ENCODE measurements at regions of chr6 and their contacts with region 1.

Region 1: GRCh38 chr6:167968091-167968490 is 29.4 kb upstream of the KIF25 start:
- DNase-seq: peak; percentile 29 to 85
- H3K4me3 ChIP-seq: no peak overlapping the region
- H3K27ac ChIP-seq: no peak overlapping the region
- H3K4me1 ChIP-seq: peaks cover 0 to 4% (median under 1%) of the 10 kb centered on the region in 4 experiments; a peak in 4 of 7 replicates
- H3K27me3 ChIP-seq: no peaks in the 10 kb centered on the region
- CTCF ChIP-seq: peak; percentile 81 to 86 (median 86)
- EP300 ChIP-seq: no peak
- POLR2A ChIP-seq: no peak
- RAD21 ChIP-seq: peak; percentile 67 to 70

Region 2: GRCh38 chr6:167949179-167949578 is 18.9 kb before region 1 on chr6:
- CTCF ChIA-PET with region 1: interaction called, 12 read pairs
- POLR2A ChIA-PET with region 1: interaction called, 5 read pairs
- DNase-seq: no peak
- H3K4me3 ChIP-seq: no peak overlapping the region
- H3K27ac ChIP-seq: no peak overlapping the region
- H3K4me1 ChIP-seq: no peaks in the 10 kb centered on the region
- H3K27me3 ChIP-seq: no peaks in the 10 kb centered on the region
- CTCF ChIP-seq: no peak
- EP300 ChIP-seq: no peak
- POLR2A ChIP-seq: no peak
- RAD21 ChIP-seq: no peak

Region 3: DNA sequence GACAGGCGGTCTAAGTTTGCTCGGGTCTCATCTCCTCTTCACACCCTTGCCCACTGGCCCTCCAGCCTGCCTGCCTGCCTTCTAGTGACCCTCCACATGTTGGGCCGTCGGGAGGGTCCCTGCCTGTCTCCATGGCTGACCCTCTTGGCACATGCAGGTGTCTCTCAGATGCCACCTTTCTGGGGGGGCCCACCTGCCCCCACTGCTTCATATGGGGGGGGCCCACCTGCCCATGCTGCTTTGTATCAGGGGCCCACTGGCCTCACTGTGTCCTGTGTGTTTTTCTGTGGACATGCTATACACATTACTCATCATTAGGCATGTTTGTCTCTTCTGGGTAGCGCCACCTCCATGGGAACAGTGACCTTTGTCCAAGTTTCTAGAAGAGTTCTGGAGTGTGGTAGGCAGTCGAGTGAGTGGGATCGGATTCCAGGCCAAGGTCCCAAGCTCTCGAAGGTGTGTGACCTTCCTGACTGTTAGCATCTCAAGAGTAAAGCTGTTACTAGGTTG is 11.1 kb before region 1 on chr6:
- CTCF ChIA-PET with region 1: interaction called, 19 read pairs
- POLR2A ChIA-PET with region 1: interaction called, 5 read pairs
- DNase-seq: no peak
- H3K4me3 ChIP-seq: no peak overlapping the region
- H3K27ac ChIP-seq: no peak overlapping the region
- H3K4me1 ChIP-seq: no peaks in the 10 kb centered on the region
- H3K27me3 ChIP-seq: no peaks in the 10 kb centered on the region
- CTCF ChIP-seq: no peak
- EP300 ChIP-seq: no peak
- POLR2A ChIP-seq: no peak
- RAD21 ChIP-seq: no peak

Region 4: DNA sequence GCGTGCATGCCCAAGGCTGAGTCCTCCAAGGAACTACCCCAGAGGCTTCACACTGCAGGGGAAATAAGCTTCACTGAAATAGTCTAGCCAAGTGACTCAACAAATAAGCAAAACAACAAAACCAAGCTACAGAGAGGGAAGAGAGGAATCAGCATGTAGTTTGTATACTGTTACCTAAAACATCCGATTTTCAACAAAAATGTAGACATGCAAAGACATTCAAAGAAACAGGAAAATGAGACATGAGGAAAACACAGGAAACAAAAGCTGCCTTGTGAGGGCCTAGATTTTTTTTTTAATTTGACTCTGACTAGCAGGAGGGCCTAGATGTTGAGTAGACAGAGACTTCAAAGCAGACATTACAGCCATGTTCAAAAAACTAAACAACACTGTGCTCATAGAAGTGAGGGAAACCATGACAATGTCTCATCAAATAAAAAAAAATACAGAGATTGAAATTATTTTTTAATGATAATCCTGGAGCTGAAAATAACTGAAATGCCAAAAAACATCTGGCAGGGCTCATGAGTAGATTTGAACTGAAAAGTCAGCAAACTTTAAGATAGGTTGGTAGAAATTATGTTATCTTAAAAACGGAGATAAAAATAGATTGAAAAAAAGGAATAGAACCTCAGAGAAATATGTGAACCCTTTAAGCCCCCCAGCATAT is 13.0 kb after region 1 on chr6:
- CTCF ChIA-PET with region 1: interaction called, 17 read pairs
- POLR2A ChIA-PET with region 1: no interaction called
- DNase-seq: no peak
- H3K4me3 ChIP-seq: no peak overlapping the region
- H3K27ac ChIP-seq: no peak overlapping the region
- H3K4me1 ChIP-seq: no peaks in the 10 kb centered on the region
- H3K27me3 ChIP-seq: no peaks in the 10 kb centered on the region
- CTCF ChIP-seq: no peak
- EP300 ChIP-seq: no peak
- POLR2A ChIP-seq: no peak
- RAD21 ChIP-seq: no peak

Region 5: DNA sequence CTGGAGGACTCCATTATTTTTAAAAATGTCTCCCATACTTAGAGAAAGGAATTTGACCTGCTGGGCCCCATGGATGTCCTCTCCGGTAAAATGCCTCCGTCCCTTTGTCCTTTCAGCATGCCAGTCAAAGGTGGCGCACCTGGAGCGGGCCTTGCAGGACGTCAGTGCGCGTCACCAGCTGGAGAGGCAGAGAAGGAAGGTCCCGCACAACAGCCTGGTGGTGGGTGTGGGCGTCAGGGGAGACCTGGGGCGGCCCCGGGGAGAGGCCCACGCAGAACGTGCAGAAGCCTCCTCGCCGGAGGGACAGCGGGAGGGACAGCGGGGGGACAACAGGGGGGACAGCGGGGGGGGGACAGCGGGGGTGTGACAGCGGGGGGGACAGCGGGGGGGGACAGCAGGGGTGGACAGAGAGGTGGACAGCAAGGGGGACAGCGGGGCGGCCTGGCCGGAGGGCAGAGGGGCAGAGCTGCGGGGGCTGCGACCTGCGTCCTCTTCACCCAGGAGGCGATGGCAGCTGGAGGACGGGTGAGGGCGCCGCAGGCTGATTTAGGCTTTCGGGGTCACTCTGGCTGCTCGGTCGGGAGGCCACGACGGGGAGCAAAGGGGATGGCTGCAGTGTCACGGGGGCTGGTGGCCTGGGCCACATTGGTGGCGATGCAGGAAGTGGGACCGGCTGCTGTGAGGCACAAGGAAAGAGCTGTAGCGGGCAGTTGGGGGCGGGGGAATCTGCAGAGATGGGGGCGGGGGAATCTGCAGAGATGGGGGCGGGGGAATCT is 28.5 kb after region 1 on chr6:
- CTCF ChIA-PET with region 1: interaction called, 11 read pairs
- POLR2A ChIA-PET with region 1: no interaction called
- DNase-seq: peak; percentile 10 to 79
- H3K4me3 ChIP-seq: 0 out of 8 replicates have a peak overlapping the region, but pooled peaks of 1 of the 4 experiments have one; percentile 32
- H3K27ac ChIP-seq: no peak overlapping the region
- H3K4me1 ChIP-seq: peaks cover 0 to 13% (median 3%) of the 10 kb centered on the region in 4 experiments; a peak in 6 of 7 replicates
- H3K27me3 ChIP-seq: no peaks in the 10 kb centered on the region
- CTCF ChIP-seq: peak; percentile 55 to 66 (median 63)
- EP300 ChIP-seq: no peak
- POLR2A ChIP-seq: no peak
- RAD21 ChIP-seq: peak; percentile 73 to 78

Region 6: DNA sequence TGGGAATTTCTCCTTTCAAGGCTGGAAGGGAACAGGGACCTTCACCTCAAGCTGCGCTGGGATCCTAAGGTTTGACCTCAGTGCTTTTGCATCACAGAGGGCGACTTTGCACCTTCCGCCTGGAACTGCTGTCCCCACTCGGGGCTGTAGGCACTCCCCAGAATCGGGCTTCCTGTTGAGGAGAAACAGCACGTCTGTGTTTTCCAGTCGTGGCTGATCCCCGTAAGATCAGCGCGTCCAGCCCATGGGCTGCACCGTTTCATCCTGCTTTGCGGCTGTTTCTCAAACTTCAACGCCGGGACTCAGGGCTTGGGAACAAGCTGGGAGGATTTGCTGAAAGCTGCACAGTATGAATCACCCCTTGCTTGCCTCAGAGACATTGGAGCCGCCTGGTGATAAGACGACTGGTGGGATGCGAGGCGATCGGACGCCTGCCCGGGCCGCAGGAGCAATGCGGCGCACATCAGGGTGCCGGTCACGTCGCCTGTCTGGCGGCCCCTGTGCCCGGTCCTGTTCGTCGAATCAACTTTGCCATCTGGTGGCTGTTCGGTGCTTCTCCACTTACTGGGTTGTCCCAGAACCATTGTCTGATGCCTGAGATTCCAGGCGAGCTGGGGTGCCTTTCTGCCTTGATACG is 164.6 kb after region 1 on chr6:
- CTCF ChIA-PET with region 1: interaction called, 14 read pairs
- POLR2A ChIA-PET with region 1: no interaction called
- DNase-seq: peak; percentile 39 to 81
- H3K4me3 ChIP-seq: peak overlapping the region in 1 of 4 experiments; percentile 25; a peak in 2 of 8 replicates
- H3K27ac ChIP-seq: no peak overlapping the region
- H3K4me1 ChIP-seq: peaks cover 7 to 18% (median 12%) of the 10 kb centered on the region in 4 experiments
- H3K27me3 ChIP-seq: peaks cover 0 to 12% (median 10%) of the 10 kb centered on the region in 4 experiments; a peak in 5 of 7 replicates
- CTCF ChIP-seq: peak in 2 of 3 experiments; percentile 71 to 81; a peak in 3 of 4 replicates
- EP300 ChIP-seq: no peak
- POLR2A ChIP-seq: no peak
- RAD21 ChIP-seq: peak; percentile 80 to 87